ENCODE measurements at regions of chr2 and their contacts with region 1.

Region 1: GRCh38 chr2:135531231-135532228 is at the start of gene R3HDM1:
- DNase-seq: peak; percentile 97 to 98
- ATAC-seq: peak; percentile 98
- H3K4me3 ChIP-seq: peak within 1 kb of the TSS; percentile 42 to 85
- H3K27ac ChIP-seq: peak within 1 kb of the TSS; percentile 20 to 96
- H3K4me1 ChIP-seq: no peaks in the 10 kb centered on the region
- H3K27me3 ChIP-seq: no peaks in the 10 kb centered on the region
- total RNA-seq, gene R3HDM1: 24.1 to 31.5 TPM

Region 2: GRCh38 chr2:135052042-135052876 is 479.3 kb before region 1 on chr2 and contains the start of gene RAB3GAP1:
- intact Hi-C with region 1: loop called in 1 of 2 experiments (anchors 2 kb)
- DNase-seq: peak; percentile 89 to 92
- ATAC-seq: peak; percentile 93
- H3K4me3 ChIP-seq: peak within 1 kb of the TSS; percentile 95 to 98
- H3K27ac ChIP-seq: peak within 1 kb of the TSS; percentile 73 to 99
- H3K4me1 ChIP-seq: peaks cover 0 to 3% of the 10 kb centered on the region in 2 donors
- H3K27me3 ChIP-seq: no peaks in the 10 kb centered on the region
- total RNA-seq, gene RAB3GAP1: 61.2 to 86.1 TPM

Region 3: GRCh38 chr2:135490376-135490775 is 41.2 kb before region 1 on chr2:
- intact Hi-C with region 1: no loop called
- DNase-seq: no peak
- ATAC-seq: no peak
- H3K4me3 ChIP-seq: no peak overlapping the region
- H3K27ac ChIP-seq: no peak overlapping the region
- H3K4me1 ChIP-seq: no peaks in the 10 kb centered on the region
- H3K27me3 ChIP-seq: no peaks in the 10 kb centered on the region

Region 4: DNA sequence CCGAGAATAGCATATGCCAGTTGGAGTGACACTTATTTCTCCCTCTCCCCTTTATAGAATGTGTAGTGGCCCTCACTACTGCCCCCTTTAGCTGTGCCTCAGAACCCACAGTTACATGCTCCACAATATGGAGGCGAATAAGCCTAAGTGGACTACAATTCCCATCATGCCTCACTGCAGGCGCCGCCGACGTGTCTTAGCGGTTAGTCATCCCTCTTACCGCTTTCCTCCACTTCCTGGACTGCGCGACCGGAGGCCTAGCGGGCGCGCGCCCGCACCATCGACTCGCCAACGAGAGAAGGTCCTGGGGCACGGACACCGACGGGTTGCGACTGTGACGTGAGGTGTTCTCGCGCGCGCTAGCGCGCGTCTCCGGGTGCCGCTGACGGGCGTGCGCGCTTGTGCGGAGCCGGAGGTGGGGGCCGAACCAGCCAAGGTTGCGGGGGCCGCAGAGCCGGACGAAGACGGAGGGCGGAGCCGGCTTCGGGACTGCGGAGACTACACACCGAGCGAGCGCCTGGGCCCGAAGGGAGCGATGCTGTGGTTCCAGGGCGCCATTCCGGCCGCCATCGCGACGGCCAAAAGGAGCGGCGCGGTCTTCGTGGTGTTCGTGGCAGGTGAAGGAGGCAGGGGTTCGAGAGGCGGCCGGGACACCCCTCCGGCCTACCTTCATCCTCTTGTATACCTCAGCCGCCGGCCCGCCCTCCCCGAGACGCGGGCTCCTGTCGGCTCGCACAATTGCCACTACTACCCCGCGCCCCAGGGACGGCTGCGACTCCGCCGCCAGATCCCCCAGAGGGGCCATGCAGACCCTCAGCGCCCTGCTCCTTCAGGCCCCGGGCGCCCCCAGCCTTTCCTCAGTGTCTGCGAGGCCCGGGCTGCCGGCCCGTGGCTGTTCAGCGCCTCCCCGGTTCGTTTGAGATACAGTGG is 210.1 kb after region 1 on chr2 and contains the start of gene UBXN4:
- intact Hi-C with region 1: loop called in 1 of 2 experiments (anchors 1 kb)
- DNase-seq: peak; percentile 99
- ATAC-seq: peak; percentile 99
- H3K4me3 ChIP-seq: peak within 1 kb of the TSS; percentile 75 to 98
- H3K27ac ChIP-seq: peak within 1 kb of the TSS; percentile 93 to 97
- H3K4me1 ChIP-seq: no peaks in the 10 kb centered on the region
- H3K27me3 ChIP-seq: no peaks in the 10 kb centered on the region
- total RNA-seq, gene UBXN4: 85.8 to 96.8 TPM

Measured in aorta (tissue), 5 donors.